Head of caudate nucleus (tissue), 42 donors: ENCODE measurements at regions of chr4 and their contacts with region 1.

Region 1: DNA sequence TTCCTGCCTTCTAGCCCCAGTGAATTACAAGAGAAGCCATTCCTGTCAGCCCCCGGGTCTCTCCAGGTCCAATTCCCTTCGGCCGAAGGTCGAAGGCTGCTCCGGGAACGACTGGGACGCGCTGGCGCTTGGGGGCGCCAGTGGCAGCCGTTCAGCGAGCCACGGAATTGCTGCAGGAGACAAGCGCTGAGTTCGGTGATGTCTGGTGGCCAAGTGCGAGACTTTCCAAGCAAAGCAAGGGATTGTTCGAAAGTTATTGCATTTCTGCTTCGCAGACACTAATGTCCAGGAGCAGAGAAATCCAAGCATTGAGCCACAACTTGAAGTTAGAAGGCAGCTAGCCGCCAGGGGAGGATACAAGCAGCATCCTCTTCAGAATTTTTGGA is 1.1 kb upstream of the DKK2 start:
- DNase-seq: peak; percentile 18 to 84 (median 68)

Region 2: DNA sequence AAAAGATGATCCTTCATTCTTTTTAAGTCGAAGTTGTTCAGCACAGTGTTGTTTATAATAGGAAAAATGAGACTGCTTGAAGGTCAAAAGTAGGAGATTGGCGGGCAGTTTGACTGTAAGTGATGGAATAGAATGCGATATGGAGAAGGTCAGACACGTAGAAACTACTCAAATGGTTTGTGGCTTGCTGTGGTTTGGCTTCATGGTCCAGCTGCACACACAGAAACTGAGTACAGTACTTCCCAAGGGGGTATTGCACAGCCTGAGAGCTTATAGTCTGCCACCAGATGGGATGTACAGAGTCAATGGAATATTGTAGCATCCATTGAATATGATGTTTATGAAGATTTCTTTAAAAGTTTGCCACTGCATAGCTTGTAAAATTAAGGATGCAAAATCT is 40.0 kb after region 1 on chr4:
- intact Hi-C with region 1: no loop called
- DNase-seq: no peak

Region 3: DNA sequence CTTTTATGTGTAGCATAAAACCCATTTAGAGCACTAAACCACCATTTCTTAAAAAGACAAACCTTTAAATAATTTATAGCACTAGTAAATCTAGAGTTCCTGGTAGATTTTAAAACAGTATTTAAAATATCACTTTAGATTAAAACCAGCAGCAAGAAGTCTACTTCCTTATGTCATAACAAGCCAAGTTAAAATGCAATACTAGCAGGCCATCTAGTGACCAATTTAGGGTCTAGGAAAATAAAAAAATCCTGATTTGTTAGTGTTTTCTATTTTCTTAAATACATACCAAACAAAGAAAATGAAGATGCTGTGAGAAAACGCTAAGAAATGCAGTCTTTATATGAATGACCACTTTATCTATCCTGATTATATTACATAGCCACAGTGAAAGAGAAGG is 628.9 kb after region 1 on chr4:
- intact Hi-C with region 1: loop called (anchors 10 kb)
- DNase-seq: no peak